ENCODE measurements at regions of chr1 and their contacts with region 1.

Region 1: DNA sequence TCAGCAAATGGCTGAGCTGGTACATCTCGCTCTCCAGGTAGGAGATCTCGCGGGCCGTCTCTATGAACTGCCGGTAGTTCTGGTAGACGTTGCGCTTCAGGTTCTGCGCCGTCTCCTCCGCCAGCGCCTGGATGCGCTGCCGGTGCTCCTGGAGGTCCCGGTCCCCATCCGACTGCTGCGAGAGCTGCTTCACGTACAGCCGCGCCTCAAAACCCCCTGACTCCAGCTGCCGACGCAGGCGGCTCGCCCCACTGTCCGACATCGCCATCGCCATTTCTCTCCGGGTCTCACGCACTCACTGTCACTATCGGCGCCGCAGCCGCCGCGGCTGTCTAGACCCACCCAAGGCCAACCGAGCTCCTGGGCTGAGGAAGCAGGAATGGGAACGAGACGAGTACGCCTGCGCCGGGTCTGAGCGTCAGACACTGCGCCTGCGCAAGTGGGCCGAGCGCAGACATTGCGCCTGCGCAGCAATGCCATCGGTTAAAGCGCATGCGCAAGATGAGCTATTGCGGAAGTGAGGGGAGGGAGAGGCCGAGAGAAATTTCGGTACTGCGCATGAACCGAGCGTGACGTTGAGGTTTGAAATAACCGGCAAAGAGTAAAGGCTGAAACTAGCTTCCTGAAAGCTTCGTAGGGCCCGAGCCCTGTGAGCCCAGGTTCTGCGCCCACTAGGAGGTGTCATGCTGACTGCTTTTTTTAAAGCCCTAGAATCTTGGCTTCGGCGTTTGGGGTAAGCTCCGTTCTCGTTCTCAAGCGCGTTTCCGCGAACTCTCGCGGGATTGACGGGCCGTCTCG is at the start of gene EXOC8:
- DNase-seq: peak; percentile 97
- ATAC-seq: peak; percentile 82
- H3K4me3 Mint-ChIP-seq: peak within 1 kb of the TSS; percentile 93
- H3K27ac Mint-ChIP-seq: peak within 1 kb of the TSS; percentile 98
- H3K4me1 Mint-ChIP-seq: peaks cover 44% of the 10 kb centered on the region
- H3K27me3 Mint-ChIP-seq: no peaks in the 10 kb centered on the region
- total RNA-seq, gene EXOC8: 10.0 to 13.7 TPM

Region 2: GRCh38 chr1:231040019-231040799 is 297.5 kb before region 1 on chr1 and contains the start of gene FAM89A:
- CTCF ChIA-PET with region 1: no interaction called
- POLR2A ChIA-PET with region 1: no interaction called
- intact Hi-C with region 1: loop called in 1 of 2 experiments (anchors 2 kb)
- DNase-seq: peak; percentile 88
- ATAC-seq: peak; percentile 76
- H3K4me3 Mint-ChIP-seq: peak within 1 kb of the TSS; percentile 75
- H3K27ac Mint-ChIP-seq: peak within 1 kb of the TSS; percentile 37
- H3K4me1 Mint-ChIP-seq: peaks cover 35% of the 10 kb centered on the region
- H3K27me3 Mint-ChIP-seq: peaks cover 4% of the 10 kb centered on the region
- total RNA-seq, gene FAM89A: 14.5 to 14.9 TPM

Region 3: DNA sequence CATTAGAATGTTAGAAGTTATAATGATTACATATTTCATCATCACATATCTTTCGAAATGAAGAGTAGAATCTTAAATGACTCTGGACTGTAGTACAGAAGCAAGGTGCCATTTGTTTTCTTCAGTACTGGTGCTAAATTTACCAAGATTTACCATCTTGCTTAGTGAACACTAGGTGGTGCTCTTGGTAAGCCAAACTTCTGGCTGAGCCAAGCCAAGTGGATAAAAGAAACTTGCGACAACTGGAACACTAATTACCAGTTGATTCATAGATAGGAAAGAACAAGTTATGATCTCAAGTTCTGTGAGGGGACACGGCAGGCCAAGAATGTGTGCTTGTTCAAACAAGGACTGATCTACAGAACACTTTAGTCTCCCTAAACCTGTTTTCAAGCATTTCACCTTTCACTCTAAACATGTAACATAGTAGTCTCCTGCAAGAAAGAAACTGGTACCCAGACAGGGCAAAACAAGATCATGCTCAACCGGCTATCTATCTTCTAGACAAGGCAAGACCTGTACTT is 20.2 kb after region 1 on chr1:
- CTCF ChIA-PET with region 1: interaction called, 13 read pairs
- POLR2A ChIA-PET with region 1: interaction called, 6 read pairs
- intact Hi-C with region 1: no loop called
- DNase-seq: peak; percentile 52
- ATAC-seq: peak; percentile 85
- H3K4me3 Mint-ChIP-seq: no peak overlapping the region
- H3K27ac Mint-ChIP-seq: peak overlapping the region; percentile 59
- H3K4me1 Mint-ChIP-seq: peaks cover 6% of the 10 kb centered on the region
- H3K27me3 Mint-ChIP-seq: no peaks in the 10 kb centered on the region

Region 4: GRCh38 chr1:231590453-231591198 is 253.0 kb after region 1 on chr1:
- CTCF ChIA-PET with region 1: interaction called, 3 read pairs
- POLR2A ChIA-PET with region 1: interaction called, 3 read pairs
- intact Hi-C with region 1: loop called in 1 of 2 experiments (anchors 1 kb)
- DNase-seq: peak; percentile 71
- ATAC-seq: peak; percentile 87
- H3K4me3 Mint-ChIP-seq: no peak overlapping the region
- H3K27ac Mint-ChIP-seq: no peak overlapping the region
- H3K4me1 Mint-ChIP-seq: no peaks in the 10 kb centered on the region
- H3K27me3 Mint-ChIP-seq: no peaks in the 10 kb centered on the region